ENCODE measurements at regions of chr6 and their contacts with region 1.

Region 1: DNA sequence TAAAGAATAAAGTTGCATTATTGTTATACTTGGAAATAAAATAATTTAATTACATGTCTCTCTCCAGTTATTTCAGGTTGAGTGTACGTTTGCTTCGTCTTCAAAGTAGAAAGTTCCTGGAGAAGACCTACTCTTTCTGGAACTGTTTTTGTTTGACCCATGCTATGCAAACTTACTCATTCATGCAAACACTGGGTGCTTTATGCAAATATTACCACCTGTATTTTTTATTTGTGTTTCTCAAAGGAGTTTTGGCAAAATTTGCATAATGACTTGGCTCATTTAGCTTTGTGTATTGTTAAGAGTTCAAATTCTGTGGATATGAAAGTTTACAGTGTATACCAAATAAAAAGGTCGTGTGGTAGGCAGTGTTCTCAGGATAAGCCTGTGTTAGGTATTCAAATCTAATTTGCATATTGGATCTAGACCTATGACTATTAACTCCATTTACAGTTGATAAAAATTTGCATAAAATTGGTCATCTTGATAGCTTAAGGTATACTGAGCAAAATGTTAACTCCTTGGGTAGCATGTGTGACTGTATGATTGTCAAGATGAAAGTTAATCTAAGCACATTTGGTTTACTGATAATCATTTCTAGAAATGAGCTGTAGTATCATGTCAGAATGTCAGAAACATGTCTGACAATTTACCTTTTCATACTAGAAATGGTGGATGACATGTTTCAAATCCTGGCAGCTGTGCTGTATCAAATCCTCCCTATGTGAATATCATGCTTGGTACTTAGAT is 65.2 kb downstream of the CDKAL1 start:
- DNase-seq: no peak
- H3K4me3 Mint-ChIP-seq: no peak overlapping the region
- H3K27ac Mint-ChIP-seq: no peak overlapping the region
- H3K4me1 Mint-ChIP-seq: peaks cover 11% of the 10 kb centered on the region
- H3K27me3 Mint-ChIP-seq: no peaks in the 10 kb centered on the region

Region 2: DNA sequence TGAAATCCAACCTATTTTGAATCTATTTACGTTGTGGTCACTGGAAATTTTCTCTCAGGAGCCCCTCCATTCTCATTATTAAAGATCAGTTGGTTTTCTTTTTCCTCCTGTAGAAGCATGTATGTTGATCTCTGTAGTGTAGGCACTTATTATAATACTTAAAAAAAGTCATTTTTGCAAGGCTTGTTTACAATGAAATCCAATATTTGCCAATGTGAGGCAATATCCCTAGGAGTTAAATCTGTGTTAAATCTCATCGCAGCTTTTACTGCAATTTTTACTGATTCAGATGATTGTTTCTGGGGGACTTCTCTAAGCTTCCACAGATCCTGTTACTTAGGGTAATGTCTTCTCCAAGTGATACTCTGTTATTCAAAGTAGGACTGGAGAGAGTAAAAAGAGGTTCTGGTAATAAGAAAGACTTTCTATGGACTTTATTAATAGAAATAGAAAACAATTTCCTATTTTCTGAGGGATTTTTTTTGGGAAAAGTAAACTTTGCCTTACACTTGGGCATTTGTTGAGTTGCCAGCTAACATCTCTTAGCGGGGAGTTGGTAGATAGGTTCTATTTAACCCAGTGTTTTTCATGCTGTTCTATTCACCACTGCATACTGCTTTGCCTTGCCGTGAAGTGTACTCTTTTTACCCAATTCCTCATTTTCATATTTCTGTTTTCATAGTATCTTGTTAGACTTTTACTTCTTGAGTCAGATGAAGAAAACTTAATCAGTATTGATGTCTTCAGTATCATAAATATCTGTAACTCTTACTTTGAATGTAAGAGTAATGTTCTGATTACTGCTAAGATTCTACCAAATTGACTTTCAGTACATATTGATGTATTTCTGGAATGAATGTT is 16.7 kb before region 1 on chr6:
- CTCF ChIA-PET with region 1: no interaction called
- POLR2A ChIA-PET with region 1: no interaction called
- intact Hi-C with region 1: loop called (anchors 1 kb)
- DNase-seq: no peak
- H3K4me3 Mint-ChIP-seq: no peak overlapping the region
- H3K27ac Mint-ChIP-seq: no peak overlapping the region
- H3K4me1 Mint-ChIP-seq: peaks cover 28% of the 10 kb centered on the region
- H3K27me3 Mint-ChIP-seq: no peaks in the 10 kb centered on the region

Region 3: GRCh38 chr6:20630617-20631548 is 31.4 kb after region 1 on chr6:
- CTCF ChIA-PET with region 1: no interaction called
- POLR2A ChIA-PET with region 1: no interaction called
- intact Hi-C with region 1: loop called (anchors 1 kb)
- DNase-seq: peak; percentile 33
- H3K4me3 Mint-ChIP-seq: no peak overlapping the region
- H3K27ac Mint-ChIP-seq: no peak overlapping the region
- H3K4me1 Mint-ChIP-seq: peaks cover 22% of the 10 kb centered on the region
- H3K27me3 Mint-ChIP-seq: no peaks in the 10 kb centered on the region

Region 4: GRCh38 chr6:21046276-21046675 is 446.8 kb after region 1 on chr6:
- CTCF ChIA-PET with region 1: no interaction called
- POLR2A ChIA-PET with region 1: no interaction called
- intact Hi-C with region 1: no loop called
- DNase-seq: no peak
- H3K4me3 Mint-ChIP-seq: no peak overlapping the region
- H3K27ac Mint-ChIP-seq: no peak overlapping the region
- H3K4me1 Mint-ChIP-seq: no peaks in the 10 kb centered on the region
- H3K27me3 Mint-ChIP-seq: no peaks in the 10 kb centered on the region